MCF 10A (cell line): ENCODE measurements at regions of chr6 and their contacts with region 1.

Region 1: GRCh38 chr6:152338335-152339125 is 298.6 kb downstream of the SYNE1 start:
- DNase-seq: peak; percentile 46
- H3K4me3 Mint-ChIP-seq: no peak overlapping the region
- H3K27ac Mint-ChIP-seq: no peak overlapping the region
- H3K4me1 Mint-ChIP-seq: peaks cover 8% of the 10 kb centered on the region
- H3K27me3 Mint-ChIP-seq: no peaks in the 10 kb centered on the region
- CTCF ChIP-seq: peak; percentile 74

Region 2: GRCh38 chr6:152246554-152247337 is 91.8 kb before region 1 on chr6:
- CTCF ChIA-PET with region 1: no interaction called
- POLR2A ChIA-PET with region 1: no interaction called
- intact Hi-C with region 1: no loop called
- DNase-seq: peak; percentile 37
- H3K4me3 Mint-ChIP-seq: no peak overlapping the region
- H3K27ac Mint-ChIP-seq: no peak overlapping the region
- H3K4me1 Mint-ChIP-seq: peaks cover 7% of the 10 kb centered on the region
- H3K27me3 Mint-ChIP-seq: no peaks in the 10 kb centered on the region
- CTCF ChIP-seq: no peak

Region 3: DNA sequence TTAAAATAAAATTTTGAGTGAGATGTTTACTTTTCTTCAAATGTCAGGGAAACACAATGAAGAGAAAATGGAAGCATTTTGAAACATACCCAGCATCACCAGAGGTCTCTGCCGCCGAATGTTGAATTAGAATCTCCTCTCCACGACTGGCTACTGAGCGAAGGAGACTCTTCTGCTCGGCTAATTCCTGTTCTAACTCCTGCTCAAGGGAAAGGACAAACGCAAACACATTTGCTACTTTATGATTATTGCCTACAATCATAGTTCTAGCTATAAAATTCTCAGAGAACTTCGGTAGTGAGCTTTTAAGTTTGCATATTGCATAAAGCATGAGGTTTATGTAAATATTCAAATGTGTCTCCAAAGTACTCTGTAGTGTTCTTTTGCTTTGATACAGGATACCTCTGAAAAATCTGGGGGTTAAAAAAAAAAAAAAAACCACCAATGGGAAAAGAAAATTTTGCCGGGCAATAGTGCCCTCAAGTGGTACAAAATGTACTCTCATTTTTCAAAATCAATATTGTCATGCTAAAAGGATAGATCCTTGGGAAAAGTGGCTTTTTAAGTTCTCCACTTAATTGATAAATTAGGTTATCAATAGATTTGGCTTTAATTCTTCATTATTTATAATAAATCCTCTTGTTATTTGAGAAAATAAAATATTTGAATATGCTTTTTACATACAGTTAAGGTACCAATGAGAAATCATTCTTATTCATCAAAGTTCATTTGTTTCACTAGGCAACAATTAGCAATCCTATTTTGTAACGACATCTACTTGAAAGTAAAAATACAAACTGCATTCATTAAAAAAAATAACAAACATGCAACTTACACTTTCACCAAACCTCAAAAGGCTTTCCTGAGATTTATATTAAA is 70.3 kb before region 1 on chr6:
- CTCF ChIA-PET with region 1: interaction called, 15 read pairs
- POLR2A ChIA-PET with region 1: interaction called, 4 read pairs
- intact Hi-C with region 1: loop called (anchors 1 kb)
- DNase-seq: peak; percentile 41
- H3K4me3 Mint-ChIP-seq: no peak overlapping the region
- H3K27ac Mint-ChIP-seq: no peak overlapping the region
- H3K4me1 Mint-ChIP-seq: peaks cover 20% of the 10 kb centered on the region
- H3K27me3 Mint-ChIP-seq: no peaks in the 10 kb centered on the region
- CTCF ChIP-seq: peak; percentile 45

Region 4: GRCh38 chr6:152295346-152295745 is 43.2 kb before region 1 on chr6:
- CTCF ChIA-PET with region 1: interaction called, 17 read pairs
- POLR2A ChIA-PET with region 1: interaction called, 3 read pairs
- intact Hi-C with region 1: no loop called
- DNase-seq: peak; percentile 56
- H3K4me3 Mint-ChIP-seq: no peak overlapping the region
- H3K27ac Mint-ChIP-seq: no peak overlapping the region
- H3K4me1 Mint-ChIP-seq: peaks cover 8% of the 10 kb centered on the region
- H3K27me3 Mint-ChIP-seq: no peaks in the 10 kb centered on the region
- CTCF ChIP-seq: no peak

Region 5: GRCh38 chr6:152316024-152316423 is 22.5 kb before region 1 on chr6:
- CTCF ChIA-PET with region 1: interaction called, 25 read pairs
- POLR2A ChIA-PET with region 1: interaction called, 3 read pairs
- intact Hi-C with region 1: no loop called
- DNase-seq: no peak
- H3K4me3 Mint-ChIP-seq: no peak overlapping the region
- H3K27ac Mint-ChIP-seq: no peak overlapping the region
- H3K4me1 Mint-ChIP-seq: peaks cover 11% of the 10 kb centered on the region
- H3K27me3 Mint-ChIP-seq: no peaks in the 10 kb centered on the region
- CTCF ChIP-seq: no peak

Region 6: GRCh38 chr6:152356451-152357061 is 18.0 kb after region 1 on chr6:
- CTCF ChIA-PET with region 1: interaction called, 16 read pairs
- POLR2A ChIA-PET with region 1: no interaction called
- intact Hi-C with region 1: no loop called
- DNase-seq: peak; percentile 48
- H3K4me3 Mint-ChIP-seq: no peak overlapping the region
- H3K27ac Mint-ChIP-seq: no peak overlapping the region
- H3K4me1 Mint-ChIP-seq: peaks cover 5% of the 10 kb centered on the region
- H3K27me3 Mint-ChIP-seq: no peaks in the 10 kb centered on the region
- CTCF ChIP-seq: peak; percentile 49